ENCODE measurements at regions of chr10 and their contacts with region 1.

Region 1: GRCh38 chr10:114103284-114103683 is 59.6 kb downstream of the ADRB1 start:
- DNase-seq: peak; percentile 55
- H3K4me3 ChIP-seq: no peak overlapping the region
- CTCF ChIP-seq: peak; percentile 56

Region 2: GRCh38 chr10:113820507-113820906 is 282.8 kb before region 1 on chr10:
- in situ Hi-C with region 1: loop called (anchors 25 kb)
- DNase-seq: no peak
- H3K4me3 ChIP-seq: no peak overlapping the region
- CTCF ChIP-seq: no peak